Testis (tissue), 5 donors: ENCODE measurements at regions of chr17 and their contacts with region 1.

Region 1: DNA sequence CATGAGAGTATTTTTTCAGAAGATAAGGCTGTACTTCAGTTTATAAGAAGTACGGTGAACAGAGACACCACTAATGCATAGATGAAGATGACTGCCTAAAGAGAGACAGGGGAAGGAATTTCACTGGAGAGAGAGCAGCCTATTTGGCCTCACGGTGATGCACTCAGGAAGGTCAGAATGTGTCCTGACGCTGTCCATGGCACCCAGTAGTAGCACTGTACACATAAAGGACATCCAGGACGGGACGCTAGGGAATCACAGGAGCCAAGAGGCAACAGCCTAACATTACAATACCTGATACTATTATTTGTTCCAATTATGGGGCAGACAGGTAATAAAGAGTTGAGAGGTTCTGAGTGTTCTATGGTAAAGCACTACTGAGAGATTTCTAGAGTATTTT is 24.9 kb upstream of the LRRC37A start:
- DNase-seq: no peak
- H3K4me3 ChIP-seq: no peak overlapping the region
- H3K27ac ChIP-seq: no peak overlapping the region
- H3K4me1 ChIP-seq: peaks cover 8% of the 10 kb centered on the region
- H3K27me3 ChIP-seq: no peaks in the 10 kb centered on the region
- CTCF ChIP-seq: no peak
- POLR2A ChIP-seq: no peak

Region 2: DNA sequence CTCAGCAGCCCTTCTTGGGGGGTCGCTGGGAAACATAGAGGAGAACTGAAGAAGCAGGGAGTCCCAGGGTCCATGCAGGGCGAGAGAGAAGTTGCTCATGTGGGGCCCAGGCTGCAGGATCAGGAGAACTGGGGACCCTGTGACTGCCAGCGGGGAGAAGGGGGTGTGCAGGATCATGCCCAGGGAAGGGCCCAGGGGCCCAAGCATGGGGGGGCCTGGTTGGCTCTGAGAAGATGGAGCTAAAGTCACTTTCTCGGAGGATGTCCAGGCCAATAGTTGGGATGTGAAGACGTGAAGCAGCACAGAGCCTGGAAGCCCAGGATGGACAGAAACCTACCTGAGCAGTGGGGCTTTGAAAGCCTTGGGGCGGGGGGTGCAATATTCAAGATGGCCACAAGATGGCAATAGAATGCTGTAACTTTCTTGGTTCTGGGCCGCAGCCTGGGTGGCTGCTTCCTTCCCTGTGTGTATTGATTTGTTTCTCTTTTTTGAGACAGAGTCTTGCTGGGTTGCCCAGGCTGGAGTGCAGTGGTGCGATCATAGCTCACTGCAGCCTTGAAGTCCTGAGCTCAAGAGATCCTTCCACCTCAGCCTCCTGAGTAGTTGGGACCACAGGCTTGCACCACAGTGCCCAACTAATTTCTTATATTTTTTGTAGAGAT is 267.6 kb before region 1 on chr17:
- intact Hi-C with region 1: loop called (anchors 10 kb)
- DNase-seq: peak; percentile 84
- H3K4me3 ChIP-seq: no peak overlapping the region
- H3K27ac ChIP-seq: no peak overlapping the region
- H3K4me1 ChIP-seq: peaks cover 4% of the 10 kb centered on the region
- H3K27me3 ChIP-seq: no peaks in the 10 kb centered on the region
- CTCF ChIP-seq: peak; percentile 95 to 98 (median 96)
- POLR2A ChIP-seq: no peak

Region 3: DNA sequence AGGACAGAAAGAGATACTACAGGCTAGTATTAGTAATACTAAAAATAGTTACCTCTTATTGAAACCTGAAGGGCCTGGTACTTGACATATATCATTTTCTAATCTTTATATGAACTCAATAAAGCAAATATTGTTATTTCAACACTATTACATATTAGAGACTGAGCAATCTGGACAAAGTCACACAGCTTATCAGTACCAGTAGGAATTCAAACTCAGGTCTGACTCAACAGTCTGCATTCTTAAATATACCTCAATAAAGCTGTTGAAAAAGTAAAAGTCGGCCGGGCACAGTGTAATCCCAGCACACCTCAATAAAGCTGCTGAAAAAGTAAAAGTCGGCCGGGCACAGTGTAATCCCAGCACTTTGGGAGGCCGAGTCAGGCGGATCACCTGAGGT is 144.2 kb before region 1 on chr17:
- intact Hi-C with region 1: no loop called
- DNase-seq: no peak
- H3K4me3 ChIP-seq: no peak overlapping the region
- H3K27ac ChIP-seq: no peak overlapping the region
- H3K4me1 ChIP-seq: peaks cover 29% of the 10 kb centered on the region
- H3K27me3 ChIP-seq: no peaks in the 10 kb centered on the region
- CTCF ChIP-seq: no peak
- POLR2A ChIP-seq: no peak

Region 4: GRCh38 chr17:46216682-46217081 is 53.4 kb before region 1 on chr17:
- intact Hi-C with region 1: no loop called
- DNase-seq: no peak
- H3K4me3 ChIP-seq: no peak overlapping the region
- H3K27ac ChIP-seq: no peak overlapping the region
- H3K4me1 ChIP-seq: no peaks in the 10 kb centered on the region
- H3K27me3 ChIP-seq: no peaks in the 10 kb centered on the region
- CTCF ChIP-seq: no peak
- POLR2A ChIP-seq: no peak